BJ (cell line): ENCODE measurements at regions of chr11 and their contacts with region 1.

Region 1: GRCh38 chr11:64000026-64000739 is 13.9 kb downstream of the OTUB1 start:
- DNase-seq: no peak
- H3K4me3 ChIP-seq: peak overlapping the region; percentile 28
- H3K27me3 ChIP-seq: no peaks in the 10 kb centered on the region
- CTCF ChIP-seq: peak; percentile 48

Region 2: DNA sequence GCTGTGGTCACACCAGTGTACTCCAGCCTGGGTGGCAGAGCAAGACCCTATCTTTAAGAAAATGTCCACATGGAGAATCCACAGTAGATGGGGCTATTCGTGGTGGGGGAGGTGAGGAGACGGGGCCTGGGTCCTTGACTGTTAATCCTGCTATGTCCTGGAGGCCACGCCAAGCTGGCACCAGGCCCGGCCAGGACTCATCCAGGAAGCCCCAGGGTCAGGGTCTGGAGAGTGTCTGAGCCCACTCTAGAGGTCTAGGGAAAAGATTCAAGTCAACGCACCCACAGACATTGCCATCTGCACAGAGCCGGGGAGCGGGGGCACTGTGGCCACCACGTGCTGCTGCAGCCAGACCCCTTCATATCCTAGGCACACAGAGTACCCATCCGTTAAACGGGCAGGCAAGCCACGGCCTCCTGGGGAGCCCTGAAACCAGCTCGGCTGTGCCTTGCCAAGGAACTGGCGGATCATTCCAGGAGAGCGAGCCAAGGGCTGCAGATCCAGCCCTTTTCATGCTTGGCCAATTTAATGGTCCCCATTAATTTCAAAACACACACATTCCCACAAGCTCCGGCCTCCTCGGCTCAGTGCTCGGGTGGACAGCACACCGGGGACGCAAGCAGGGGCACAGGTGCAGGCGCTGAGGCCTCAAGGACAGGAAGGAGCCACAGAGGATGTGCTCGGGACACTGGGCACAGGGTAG is 141.0 kb after region 1 on chr11:
- CTCF ChIA-PET with region 1: interaction called, 239 read pairs
- POLR2A ChIA-PET with region 1: no interaction called
- DNase-seq: no peak
- H3K4me3 ChIP-seq: no peak overlapping the region
- H3K27me3 ChIP-seq: no peaks in the 10 kb centered on the region
- CTCF ChIP-seq: no peak